Naive thymus-derived CD4-positive, alpha-beta T cell (primary cell): ENCODE measurements at regions of chr2 and their contacts with region 1.

Region 1: GRCh38 chr2:197378494-197379307 is 56.1 kb downstream of the SF3B1 start:
- DNase-seq: peak; percentile 26 to 72 (median 61)
- ATAC-seq: peak; percentile 83
- H3K4me3 ChIP-seq: no peak overlapping the region
- H3K4me3 Mint-ChIP-seq: peak overlapping the region in 2 of 10 donors; percentile 21 to 47
- H3K27ac ChIP-seq: no peak overlapping the region
- H3K27ac Mint-ChIP-seq: peak overlapping the region in 2 of 9 donors; percentile 45 to 75
- H3K4me1 ChIP-seq: peaks cover 0 to 6% of the 10 kb centered on the region in 2 donors
- H3K4me1 Mint-ChIP-seq: peaks cover 9 to 27% (median 16%) of the 10 kb centered on the region in 7 donors
- H3K27me3 ChIP-seq: no peaks in the 10 kb centered on the region
- H3K27me3 Mint-ChIP-seq: peaks cover 0 to 12% (median 0%) of the 10 kb centered on the region in 5 donors

Region 2: DNA sequence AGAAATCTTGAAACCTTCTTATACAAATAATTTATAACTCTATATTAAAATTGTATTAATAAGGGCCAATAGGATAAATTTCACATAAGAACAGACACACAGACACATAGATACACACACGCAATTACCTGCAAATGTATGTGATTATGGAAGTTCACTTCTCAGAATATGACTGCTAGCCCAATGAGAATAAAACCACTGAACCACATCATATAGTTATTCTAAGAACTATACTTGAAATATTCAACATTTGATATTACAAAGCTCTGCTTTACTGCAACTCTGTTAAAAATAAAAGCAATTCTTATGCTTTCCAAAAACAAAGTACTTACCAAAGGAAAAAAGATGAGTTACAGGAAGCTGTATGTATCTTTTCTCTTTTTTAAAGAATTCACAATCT is 503.3 kb before region 1 on chr2:
- CTCF ChIA-PET with region 1: no interaction called
- POLR2A ChIA-PET with region 1: no interaction called
- intact Hi-C with region 1: loop called in 1 of 2 experiments (anchors 10 kb)
- DNase-seq: no peak
- ATAC-seq: no peak
- H3K4me3 ChIP-seq: no peak overlapping the region
- H3K4me3 Mint-ChIP-seq: no peak overlapping the region
- H3K27ac ChIP-seq: no peak overlapping the region
- H3K27ac Mint-ChIP-seq: no peak overlapping the region
- H3K4me1 ChIP-seq: no peaks in the 10 kb centered on the region
- H3K4me1 Mint-ChIP-seq: peaks cover 0 to 43% (median 4%) of the 10 kb centered on the region in 7 donors
- H3K27me3 ChIP-seq: no peaks in the 10 kb centered on the region
- H3K27me3 Mint-ChIP-seq: no peaks in the 10 kb centered on the region

Region 3: DNA sequence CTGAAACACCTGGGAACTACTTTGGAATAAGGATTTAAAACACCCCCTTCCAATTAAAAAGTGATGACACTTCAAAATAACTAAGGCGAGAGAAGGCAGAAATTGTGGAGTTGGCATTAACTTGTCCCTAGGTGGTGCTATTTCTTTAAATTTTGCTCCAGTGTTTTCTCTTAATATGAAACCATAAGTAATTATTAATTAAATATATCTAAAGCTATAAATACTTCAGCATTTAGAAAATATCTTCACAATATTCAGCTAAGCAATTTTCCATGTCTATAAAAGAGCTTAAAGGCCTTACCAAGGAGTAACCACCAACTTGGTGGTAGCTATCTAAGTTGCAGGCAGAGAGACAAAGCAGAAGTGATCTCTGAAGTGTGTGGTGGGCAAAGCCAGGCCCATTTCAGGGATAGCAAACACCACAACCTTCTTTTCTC is 265.4 kb before region 1 on chr2:
- CTCF ChIA-PET with region 1: interaction called, 38 read pairs
- POLR2A ChIA-PET with region 1: interaction called, 3 read pairs
- intact Hi-C with region 1: loop called (anchors 1 kb)
- DNase-seq: peak in 7 of 9 donors; percentile 22 to 58 (median 42)
- ATAC-seq: peak; percentile 70
- H3K4me3 ChIP-seq: no peak overlapping the region
- H3K4me3 Mint-ChIP-seq: no peak overlapping the region
- H3K27ac ChIP-seq: peak overlapping the region; percentile 1
- H3K27ac Mint-ChIP-seq: peak overlapping the region; percentile 36 to 95 (median 76)
- H3K4me1 ChIP-seq: peaks cover 0 to 13% of the 10 kb centered on the region in 2 donors
- H3K4me1 Mint-ChIP-seq: peaks cover 21 to 43% (median 38%) of the 10 kb centered on the region in 7 donors
- H3K27me3 ChIP-seq: no peaks in the 10 kb centered on the region
- H3K27me3 Mint-ChIP-seq: no peaks in the 10 kb centered on the region

Region 4: DNA sequence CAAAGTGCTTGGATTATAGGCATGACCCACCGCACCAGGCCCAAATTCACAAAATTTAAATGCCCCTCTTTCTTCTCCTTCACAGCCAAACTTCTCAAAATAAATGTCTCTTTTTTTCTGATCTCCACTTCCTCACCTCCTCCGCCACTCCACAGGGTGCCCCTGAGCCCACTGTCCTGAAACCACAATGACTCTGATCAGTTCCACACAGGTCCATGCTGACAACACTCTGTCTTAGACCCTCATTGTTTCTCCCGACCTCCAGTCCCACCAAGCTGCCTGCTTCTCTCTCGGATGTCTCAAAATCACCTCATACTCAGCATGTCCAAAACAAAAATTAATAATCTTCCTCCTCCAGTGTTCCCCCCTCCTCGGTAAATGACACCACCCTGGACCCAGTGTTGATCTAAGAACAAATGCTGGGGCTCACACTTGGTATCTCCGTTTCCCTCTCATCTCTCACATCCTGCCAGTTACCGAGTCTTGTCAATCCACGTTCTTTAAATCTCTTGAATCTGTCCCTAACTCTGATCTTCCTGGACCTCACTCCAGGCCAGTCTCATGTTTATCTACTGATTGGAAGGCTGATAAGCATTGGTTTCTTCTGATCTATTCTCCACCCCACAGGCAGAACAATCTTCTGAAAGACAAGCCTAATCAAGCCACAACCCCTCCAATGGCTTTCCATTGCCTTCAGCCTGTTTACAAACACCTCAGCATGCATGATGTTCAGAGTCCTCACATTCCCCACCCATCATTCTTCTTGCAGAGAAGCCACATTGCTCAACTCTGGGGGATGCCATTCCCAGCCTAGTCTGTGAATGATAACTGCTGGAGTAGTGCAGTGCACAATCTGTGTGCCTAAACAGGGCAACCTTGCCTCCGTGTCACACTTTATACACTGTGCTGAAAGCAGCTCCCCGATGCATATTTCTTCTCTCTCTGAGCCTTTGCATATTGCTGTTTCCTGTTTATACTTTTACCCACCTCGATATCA is 55.7 kb before region 1 on chr2:
- CTCF ChIA-PET with region 1: interaction called, 5 read pairs
- POLR2A ChIA-PET with region 1: no interaction called
- intact Hi-C with region 1: loop called in 1 of 2 experiments (anchors 1 kb)
- DNase-seq: peak in 6 of 9 donors; percentile 43 to 65 (median 50)
- ATAC-seq: peak; percentile 76
- H3K4me3 ChIP-seq: peak overlapping the region; percentile 36
- H3K4me3 Mint-ChIP-seq: peak overlapping the region; percentile 68 to 88 (median 76)
- H3K27ac ChIP-seq: peak overlapping the region; percentile 73
- H3K27ac Mint-ChIP-seq: peak overlapping the region; percentile 96 to 99 (median 97)
- H3K4me1 ChIP-seq: peaks cover 33 to 59% of the 10 kb centered on the region in 2 donors
- H3K4me1 Mint-ChIP-seq: peaks cover 43 to 81% (median 71%) of the 10 kb centered on the region in 7 donors
- H3K27me3 ChIP-seq: no peaks in the 10 kb centered on the region
- H3K27me3 Mint-ChIP-seq: no peaks in the 10 kb centered on the region